Cardiac septum (tissue), 1 donor: ENCODE measurements at regions of chr19 and their contacts with region 1.

Region 1: GRCh38 chr19:16771618-16772017 is 52.0 kb downstream of the NWD1 start:
- DNase-seq: peak; percentile 80

Region 2: DNA sequence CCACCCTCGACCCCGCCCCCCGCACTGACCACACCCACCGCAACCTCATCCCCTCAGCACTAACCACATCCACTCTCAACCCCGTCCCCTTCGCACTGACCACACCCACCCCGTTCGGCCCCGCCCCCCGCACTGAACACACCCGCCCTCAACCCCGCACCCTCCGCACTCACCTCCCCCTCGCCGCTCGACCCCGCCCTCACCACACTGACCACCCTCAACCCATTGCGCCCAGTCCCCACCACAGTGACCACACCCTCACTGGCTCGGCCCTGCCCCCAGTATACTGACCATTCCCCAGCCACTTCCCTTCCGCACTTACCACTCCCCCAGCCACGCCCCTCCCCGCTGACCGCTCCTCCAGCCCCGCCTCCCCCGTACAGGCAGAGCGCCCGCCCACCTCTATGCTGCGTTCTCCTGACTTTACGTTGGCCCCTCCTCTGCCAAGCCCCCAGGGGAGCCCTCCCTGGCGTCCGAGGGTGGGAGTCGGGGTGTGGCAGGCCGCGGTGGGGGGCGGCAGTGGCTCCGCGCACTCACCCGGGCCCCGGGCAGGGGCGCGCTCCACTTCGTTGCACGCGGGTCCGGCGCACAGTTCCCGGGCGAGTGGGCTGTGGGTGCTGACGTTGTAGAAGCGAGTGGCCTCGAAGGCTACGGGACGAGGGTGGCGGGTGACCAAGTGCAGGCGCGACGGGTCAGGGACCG is 125.7 kb after region 1 on chr19:
- intact Hi-C with region 1: loop called (anchors 10 kb)
- DNase-seq: peak; percentile 96

Region 3: GRCh38 chr19:17052439-17053210 is 281.0 kb after region 1 on chr19:
- intact Hi-C with region 1: loop called (anchors 2 kb)
- DNase-seq: no peak

Region 4: GRCh38 chr19:17282488-17283255 is 511.1 kb after region 1 on chr19:
- intact Hi-C with region 1: loop called (anchors 5 kb)
- DNase-seq: peak; percentile 93